Cardiac septum (tissue), 1 donor: ENCODE measurements at regions of chr2 and their contacts with region 1.

Region 1: GRCh38 chr2:152513681-152514080 is 178.7 kb downstream of the FMNL2 start:
- DNase-seq: no peak

Region 2: GRCh38 chr2:152566728-152567069 is 53.0 kb after region 1 on chr2:
- intact Hi-C with region 1: loop called (anchors 5 kb)
- DNase-seq: no peak

Region 3: DNA sequence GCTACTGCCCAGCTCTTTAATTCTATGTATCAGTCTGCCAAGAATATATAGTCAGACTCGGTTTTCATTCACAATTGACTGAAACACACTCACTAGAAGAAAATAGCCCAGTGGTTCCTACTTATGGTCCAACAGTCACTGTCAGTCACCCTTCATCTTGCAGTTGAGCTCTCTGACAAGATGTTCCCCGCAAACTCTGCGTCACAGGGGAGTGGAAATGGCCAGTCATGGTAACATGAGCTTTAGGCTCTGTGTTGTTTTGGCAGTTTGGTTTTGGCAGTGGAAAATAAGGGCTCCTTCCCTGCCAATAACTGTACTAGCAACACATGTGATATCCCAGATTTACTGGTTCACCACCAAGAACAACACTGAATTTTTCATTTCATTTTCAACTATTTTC is 81.1 kb after region 1 on chr2:
- intact Hi-C with region 1: no loop called
- DNase-seq: no peak

Region 4: DNA sequence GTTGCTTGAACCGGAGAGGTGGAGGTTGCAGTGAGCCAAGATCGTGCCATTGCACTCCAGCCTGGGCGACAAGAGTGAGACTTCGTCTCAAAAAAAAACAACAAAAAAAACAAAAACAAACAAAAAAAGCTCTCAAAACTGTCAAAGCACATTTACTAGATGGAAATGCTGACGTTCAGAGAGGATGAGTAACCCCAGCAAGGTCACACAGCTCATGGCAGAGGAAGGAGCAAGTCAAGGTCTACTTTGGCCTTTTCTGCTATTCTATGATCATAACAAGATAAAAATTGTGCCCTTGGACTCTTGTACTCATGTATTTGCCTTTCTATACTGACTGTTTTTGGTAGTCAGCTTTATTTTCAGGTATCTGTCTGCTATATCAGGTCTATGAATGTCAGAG is 314.3 kb after region 1 on chr2:
- intact Hi-C with region 1: no loop called
- DNase-seq: no peak